ENCODE measurements at regions of chr12 and their contacts with region 1.

Region 1: GRCh38 chr12:105382771-105383622 is 52.5 kb downstream of the C12orf75 start:
- DNase-seq: peak; percentile 72 to 80
- ATAC-seq: peak; percentile 46 to 76; a peak in 4 of 6 replicates
- H3K4me3 ChIP-seq: peak overlapping the region; percentile 21; the same call in 2 of the 3 replicates
- H3K27ac ChIP-seq: peak overlapping the region; percentile 9 to 75; a peak in 3 of 6 replicates
- H3K4me1 ChIP-seq: peaks cover 5% of the 10 kb centered on the region
- CTCF ChIP-seq: peak; percentile 95
- EP300 ChIP-seq: no peak
- POLR2A ChIP-seq: no peak
- RAD21 ChIP-seq: peak; percentile 95 to 98

Region 2: GRCh38 chr12:105393587-105393986 is 10.6 kb after region 1 on chr12:
- CTCF ChIA-PET with region 1: interaction called, 20 read pairs
- POLR2A ChIA-PET with region 1: no interaction called
- DNase-seq: no peak
- ATAC-seq: no peak
- H3K4me3 ChIP-seq: no peak overlapping the region
- H3K27ac ChIP-seq: no peak overlapping the region
- H3K4me1 ChIP-seq: no peaks in the 10 kb centered on the region
- CTCF ChIP-seq: no peak
- EP300 ChIP-seq: no peak
- POLR2A ChIP-seq: no peak
- RAD21 ChIP-seq: no peak

Region 3: GRCh38 chr12:105401198-105401597 is 18.2 kb after region 1 on chr12:
- CTCF ChIA-PET with region 1: interaction called, 20 read pairs
- POLR2A ChIA-PET with region 1: no interaction called
- DNase-seq: no peak
- ATAC-seq: no peak
- H3K4me3 ChIP-seq: no peak overlapping the region
- H3K27ac ChIP-seq: no peak overlapping the region
- H3K4me1 ChIP-seq: no peaks in the 10 kb centered on the region
- CTCF ChIP-seq: no peak
- EP300 ChIP-seq: no peak
- POLR2A ChIP-seq: no peak
- RAD21 ChIP-seq: no peak

Measured in A549 (cell line).